CD8-positive, alpha-beta T cell (primary cell): ENCODE measurements at regions of chr16 and their contacts with region 1.

Region 1: GRCh38 chr16:56817938-56818337 is 47.1 kb upstream of the SLC12A3 start:
- DNase-seq: no peak
- ATAC-seq: no peak
- H3K4me3 ChIP-seq: no peak overlapping the region
- H3K4me3 Mint-ChIP-seq: no peak overlapping the region
- H3K27ac ChIP-seq: no peak overlapping the region
- H3K27ac Mint-ChIP-seq: peak overlapping the region; percentile 16
- H3K4me1 ChIP-seq: no peaks in the 10 kb centered on the region
- H3K4me1 Mint-ChIP-seq: no peaks in the 10 kb centered on the region
- H3K27me3 ChIP-seq: no peaks in the 10 kb centered on the region
- H3K27me3 Mint-ChIP-seq: no peaks in the 10 kb centered on the region
- CTCF ChIP-seq: no peak

Region 2: DNA sequence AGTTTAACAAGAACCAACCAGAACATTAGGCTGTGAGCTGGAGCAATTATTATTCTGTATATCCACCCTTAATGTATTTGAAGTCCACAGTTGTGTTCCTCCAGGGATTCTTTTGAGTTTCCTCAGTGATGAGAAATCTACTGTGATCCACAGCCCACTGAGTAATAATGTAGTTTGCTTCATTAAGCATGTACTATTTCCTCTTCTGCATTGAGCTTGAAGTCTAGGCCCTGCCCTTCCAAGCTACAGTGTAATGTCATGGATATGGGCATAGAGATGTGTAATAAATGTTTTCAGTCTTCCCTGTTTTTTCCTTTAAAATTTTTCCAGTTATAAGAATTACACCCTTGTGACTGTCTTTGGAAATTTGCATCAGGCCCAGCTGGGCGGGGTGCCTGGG is 10.7 kb after region 1 on chr16:
- CTCF ChIA-PET with region 1: interaction called, 11 read pairs
- POLR2A ChIA-PET with region 1: interaction called, 3 read pairs
- intact Hi-C with region 1: no loop called
- DNase-seq: no peak
- ATAC-seq: no peak
- H3K4me3 ChIP-seq: no peak overlapping the region
- H3K4me3 Mint-ChIP-seq: no peak overlapping the region
- H3K27ac ChIP-seq: no peak overlapping the region
- H3K27ac Mint-ChIP-seq: no peak overlapping the region
- H3K4me1 ChIP-seq: no peaks in the 10 kb centered on the region
- H3K4me1 Mint-ChIP-seq: peaks cover 9% of the 10 kb centered on the region
- H3K27me3 ChIP-seq: no peaks in the 10 kb centered on the region
- H3K27me3 Mint-ChIP-seq: no peaks in the 10 kb centered on the region
- CTCF ChIP-seq: no peak